ENCODE measurements at regions of chr1 and their contacts with region 1.

Region 1: GRCh38 chr1:179954493-179955297 is at the start of gene CEP350:
- DNase-seq: peak; percentile 100
- H3K4me3 Mint-ChIP-seq: peak within 1 kb of the TSS; percentile 84
- H3K27ac Mint-ChIP-seq: peak within 1 kb of the TSS; percentile 87
- H3K4me1 Mint-ChIP-seq: peaks cover 14% of the 10 kb centered on the region
- H3K27me3 Mint-ChIP-seq: no peaks in the 10 kb centered on the region
- CTCF ChIP-seq: no peak
- total RNA-seq, gene CEP350: 54.3 and 56.4 TPM in 2 replicates

Region 2: GRCh38 chr1:179840107-179840506 is 114.6 kb before region 1 on chr1:
- CTCF ChIA-PET with region 1: no interaction called
- POLR2A ChIA-PET with region 1: no interaction called
- intact Hi-C with region 1: no loop called
- DNase-seq: no peak
- H3K4me3 Mint-ChIP-seq: no peak overlapping the region
- H3K27ac Mint-ChIP-seq: no peak overlapping the region
- H3K4me1 Mint-ChIP-seq: no peaks in the 10 kb centered on the region
- H3K27me3 Mint-ChIP-seq: no peaks in the 10 kb centered on the region
- CTCF ChIP-seq: no peak

Region 3: GRCh38 chr1:179926494-179927205 is 28.0 kb before region 1 on chr1:
- CTCF ChIA-PET with region 1: interaction called, 11 read pairs
- POLR2A ChIA-PET with region 1: interaction called, 38 read pairs
- intact Hi-C with region 1: no loop called
- DNase-seq: peak; percentile 90
- H3K4me3 Mint-ChIP-seq: no peak overlapping the region
- H3K27ac Mint-ChIP-seq: peak overlapping the region; percentile 91
- H3K4me1 Mint-ChIP-seq: peaks cover 17% of the 10 kb centered on the region
- H3K27me3 Mint-ChIP-seq: no peaks in the 10 kb centered on the region
- CTCF ChIP-seq: no peak

Region 4: GRCh38 chr1:179966551-179966950 is 11.9 kb after region 1 on chr1:
- CTCF ChIA-PET with region 1: interaction called, 5 read pairs
- POLR2A ChIA-PET with region 1: interaction called, 30 read pairs
- intact Hi-C with region 1: no loop called
- DNase-seq: no peak
- H3K4me3 Mint-ChIP-seq: no peak overlapping the region
- H3K27ac Mint-ChIP-seq: no peak overlapping the region
- H3K4me1 Mint-ChIP-seq: peaks cover 32% of the 10 kb centered on the region
- H3K27me3 Mint-ChIP-seq: no peaks in the 10 kb centered on the region
- CTCF ChIP-seq: no peak

Region 5: DNA sequence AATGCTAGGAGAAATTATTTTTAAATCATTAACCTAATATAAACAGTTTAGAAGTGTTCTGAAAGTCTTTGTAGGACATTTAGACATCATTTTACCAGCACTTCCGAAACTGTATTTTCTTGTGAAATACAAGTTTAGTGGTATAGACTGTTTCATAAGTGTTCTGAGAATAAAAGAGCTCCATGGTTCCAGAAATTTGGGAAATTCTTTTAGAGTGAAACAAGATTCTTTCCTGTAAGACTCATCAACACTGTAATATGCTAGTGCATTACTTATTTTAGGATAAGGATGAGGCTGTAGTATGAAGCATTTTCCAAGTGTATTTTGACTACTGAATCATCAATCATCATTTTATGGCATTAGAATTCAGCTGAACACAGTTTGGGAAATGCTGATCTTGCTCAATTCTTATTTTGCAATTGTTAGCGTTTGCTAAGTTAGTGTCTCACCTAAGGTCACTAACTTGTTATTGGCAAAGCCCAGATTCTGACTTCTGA is 73.3 kb after region 1 on chr1:
- CTCF ChIA-PET with region 1: no interaction called
- POLR2A ChIA-PET with region 1: interaction called, 25 read pairs
- intact Hi-C with region 1: loop called (anchors 2 kb)
- DNase-seq: peak; percentile 90
- H3K4me3 Mint-ChIP-seq: no peak overlapping the region
- H3K27ac Mint-ChIP-seq: peak overlapping the region; percentile 69
- H3K4me1 Mint-ChIP-seq: peaks cover 22% of the 10 kb centered on the region
- H3K27me3 Mint-ChIP-seq: no peaks in the 10 kb centered on the region
- CTCF ChIP-seq: no peak

Region 6: GRCh38 chr1:180168786-180169639 is 214.3 kb after region 1 on chr1:
- CTCF ChIA-PET with region 1: no interaction called
- POLR2A ChIA-PET with region 1: no interaction called
- intact Hi-C with region 1: loop called (anchors 5 kb)
- DNase-seq: peak; percentile 69
- H3K4me3 Mint-ChIP-seq: no peak overlapping the region
- H3K27ac Mint-ChIP-seq: peak overlapping the region; percentile 77
- H3K4me1 Mint-ChIP-seq: peaks cover 29% of the 10 kb centered on the region
- H3K27me3 Mint-ChIP-seq: no peaks in the 10 kb centered on the region
- CTCF ChIP-seq: peak; percentile 47

Region 7: GRCh38 chr1:180424848-180425457 is 470.3 kb after region 1 on chr1:
- CTCF ChIA-PET with region 1: no interaction called
- POLR2A ChIA-PET with region 1: no interaction called
- intact Hi-C with region 1: no loop called
- DNase-seq: no peak
- H3K4me3 Mint-ChIP-seq: no peak overlapping the region
- H3K27ac Mint-ChIP-seq: peak overlapping the region; percentile 13
- H3K4me1 Mint-ChIP-seq: peaks cover 6% of the 10 kb centered on the region
- H3K27me3 Mint-ChIP-seq: no peaks in the 10 kb centered on the region
- CTCF ChIP-seq: no peak